ENCODE measurements at regions of chr5 and their contacts with region 1.

Region 1: DNA sequence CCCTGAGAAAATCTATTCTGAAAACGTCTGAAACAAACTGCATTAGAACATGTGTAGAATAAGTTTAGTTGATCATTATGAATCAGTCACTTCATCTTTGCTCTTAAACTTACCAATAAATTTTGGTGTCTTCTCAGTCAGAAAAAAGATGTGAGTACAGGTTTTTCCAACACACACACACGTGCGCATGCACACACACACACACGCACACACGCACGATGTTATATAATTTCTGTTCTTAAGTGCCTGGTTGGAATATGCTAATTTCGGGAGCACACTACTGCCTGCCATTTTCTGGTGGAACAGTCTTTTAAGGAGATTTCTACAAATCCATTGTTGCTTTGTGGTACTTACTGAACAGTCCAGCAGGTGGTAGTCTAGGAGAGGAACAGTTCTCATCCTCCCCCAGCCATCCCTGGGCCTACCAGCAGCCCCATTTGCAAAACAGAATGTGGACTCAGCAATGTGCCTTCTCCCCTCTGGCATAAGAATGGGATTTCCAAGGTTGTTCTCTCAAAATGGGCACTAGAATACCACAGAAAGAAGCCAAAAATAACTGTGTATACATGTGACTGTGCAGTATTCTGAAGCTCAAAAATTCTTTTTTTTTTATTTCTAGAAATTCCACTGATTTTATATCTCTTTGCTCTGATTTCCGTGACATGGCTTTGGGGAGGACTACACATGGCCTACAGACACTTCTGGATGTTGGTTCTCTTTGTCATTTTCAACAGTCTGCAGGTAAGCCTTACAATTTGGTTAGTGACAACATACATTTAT is 281.3 kb downstream of the ARRDC3 start:
- DNase-seq: peak; percentile 70
- H3K4me3 Mint-ChIP-seq: no peak overlapping the region
- H3K27ac Mint-ChIP-seq: no peak overlapping the region
- H3K4me1 Mint-ChIP-seq: no peaks in the 10 kb centered on the region
- H3K27me3 Mint-ChIP-seq: peaks cover 2% of the 10 kb centered on the region

Region 2: GRCh38 chr5:90866333-90866732 is 235.5 kb before region 1 on chr5:
- CTCF ChIA-PET with region 1: no interaction called
- intact Hi-C with region 1: loop called (anchors 1 kb)
- DNase-seq: no peak
- H3K4me3 Mint-ChIP-seq: no peak overlapping the region
- H3K27ac Mint-ChIP-seq: no peak overlapping the region
- H3K4me1 Mint-ChIP-seq: peaks cover 4% of the 10 kb centered on the region
- H3K27me3 Mint-ChIP-seq: peaks cover 7% of the 10 kb centered on the region

Region 3: GRCh38 chr5:90932052-90932699 is 169.6 kb before region 1 on chr5:
- CTCF ChIA-PET with region 1: interaction called, 5 read pairs
- intact Hi-C with region 1: loop called (anchors 1 kb)
- DNase-seq: peak; percentile 65
- H3K4me3 Mint-ChIP-seq: no peak overlapping the region
- H3K27ac Mint-ChIP-seq: no peak overlapping the region
- H3K4me1 Mint-ChIP-seq: peaks cover 5% of the 10 kb centered on the region
- H3K27me3 Mint-ChIP-seq: peaks cover 8% of the 10 kb centered on the region

Region 4: GRCh38 chr5:91219803-91220371 is 118.1 kb after region 1 on chr5:
- CTCF ChIA-PET with region 1: interaction called, 10 read pairs
- intact Hi-C with region 1: loop called (anchors 2 kb)
- DNase-seq: peak; percentile 59
- H3K4me3 Mint-ChIP-seq: no peak overlapping the region
- H3K27ac Mint-ChIP-seq: no peak overlapping the region
- H3K4me1 Mint-ChIP-seq: no peaks in the 10 kb centered on the region
- H3K27me3 Mint-ChIP-seq: no peaks in the 10 kb centered on the region

Region 5: DNA sequence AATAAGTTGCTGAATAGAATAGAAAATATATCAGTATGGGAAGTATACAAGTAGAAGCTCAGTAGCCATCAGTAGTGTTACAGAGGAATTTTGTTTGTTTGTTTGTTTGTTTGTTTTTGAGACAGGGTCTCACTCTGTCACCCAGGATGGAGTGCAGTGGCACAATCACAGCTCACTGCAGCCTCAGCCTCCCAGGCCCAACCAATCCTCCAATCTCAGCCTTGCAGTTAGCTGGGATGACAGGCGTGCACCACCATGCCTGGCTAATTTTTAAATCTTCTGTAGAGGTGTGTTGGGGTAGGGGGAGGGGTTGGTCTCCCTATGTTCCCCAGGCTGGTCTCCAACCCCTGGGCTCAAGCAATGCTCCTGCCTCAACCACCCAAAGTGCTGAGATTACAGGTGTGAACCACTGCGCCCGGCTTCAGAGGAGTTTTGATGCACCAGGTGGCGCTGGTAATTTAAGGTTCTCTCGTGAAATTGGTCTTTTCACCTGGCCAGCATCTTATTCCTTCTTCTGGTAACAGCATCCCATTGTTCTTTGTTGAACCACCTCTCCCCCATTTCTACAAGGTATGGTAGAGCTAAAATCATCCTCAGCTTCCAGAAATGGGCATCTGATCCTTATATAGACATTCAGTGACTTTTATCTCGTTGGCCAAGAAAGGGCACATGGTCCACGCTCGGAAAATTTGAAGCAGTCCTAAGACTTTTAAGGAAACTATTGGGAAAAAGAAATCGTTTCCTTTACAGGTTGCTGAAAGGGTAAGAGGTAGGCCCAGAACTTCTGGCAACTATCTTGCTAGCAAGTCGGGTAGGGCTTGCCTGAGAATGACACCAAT is 124.3 kb after region 1 on chr5:
- CTCF ChIA-PET with region 1: interaction called, 10 read pairs
- intact Hi-C with region 1: loop called (anchors 1 kb)
- DNase-seq: peak; percentile 80
- H3K4me3 Mint-ChIP-seq: no peak overlapping the region
- H3K27ac Mint-ChIP-seq: no peak overlapping the region
- H3K4me1 Mint-ChIP-seq: peaks cover 4% of the 10 kb centered on the region
- H3K27me3 Mint-ChIP-seq: no peaks in the 10 kb centered on the region

Measured in activated naive CD4-positive, alpha-beta T cell treated with anti-CD3 and anti-CD28 coated beads for 36 hours (primary cell).